Transverse colon (tissue), 4 donors: ENCODE measurements at regions of chr16 and their contacts with region 1.

Region 1: DNA sequence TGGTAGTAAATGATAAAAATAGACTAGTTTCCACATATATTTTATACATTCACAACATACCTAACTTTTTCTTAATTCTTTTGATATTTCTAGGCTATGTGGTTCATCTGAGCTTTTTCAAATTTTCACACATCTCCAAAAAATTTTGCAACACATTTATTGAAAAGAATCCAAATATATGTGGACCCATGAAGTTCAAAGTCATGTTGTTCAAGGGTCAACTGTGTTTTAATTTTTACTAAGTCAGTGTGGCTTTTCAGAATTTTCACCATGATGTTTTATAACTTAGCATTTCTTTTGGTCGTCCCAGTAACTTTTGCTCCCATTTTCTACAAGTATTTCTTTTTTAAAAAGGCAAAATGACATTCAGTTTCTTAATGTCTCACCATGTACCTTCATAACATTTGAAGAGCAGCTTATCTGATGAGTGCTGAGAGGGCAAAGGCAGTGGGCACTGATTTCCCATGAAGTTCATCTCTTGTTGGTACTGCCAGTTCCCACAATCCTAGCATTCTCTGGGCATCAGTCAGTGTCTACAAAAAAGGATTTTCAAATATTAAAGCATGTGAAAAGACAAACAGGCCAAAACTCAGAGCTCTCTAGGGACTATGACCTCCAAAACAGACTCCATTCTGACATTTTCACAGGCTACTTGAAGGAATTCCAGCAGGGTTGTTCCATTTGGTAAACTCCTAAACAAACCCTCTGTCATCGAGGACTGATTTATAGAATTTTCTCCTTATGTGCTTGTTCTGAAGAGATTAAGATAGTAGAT is 80.3 kb downstream of the MRTFB start:
- DNase-seq: no peak
- H3K4me3 ChIP-seq: no peak overlapping the region
- H3K27ac ChIP-seq: no peak overlapping the region
- H3K4me1 ChIP-seq: peaks cover 0 to 3% (median 0%) of the 10 kb centered on the region in 4 donors
- H3K27me3 ChIP-seq: no peaks in the 10 kb centered on the region
- CTCF ChIP-seq: no peak
- EP300 ChIP-seq: no peak
- POLR2A ChIP-seq: no peak

Region 2: DNA sequence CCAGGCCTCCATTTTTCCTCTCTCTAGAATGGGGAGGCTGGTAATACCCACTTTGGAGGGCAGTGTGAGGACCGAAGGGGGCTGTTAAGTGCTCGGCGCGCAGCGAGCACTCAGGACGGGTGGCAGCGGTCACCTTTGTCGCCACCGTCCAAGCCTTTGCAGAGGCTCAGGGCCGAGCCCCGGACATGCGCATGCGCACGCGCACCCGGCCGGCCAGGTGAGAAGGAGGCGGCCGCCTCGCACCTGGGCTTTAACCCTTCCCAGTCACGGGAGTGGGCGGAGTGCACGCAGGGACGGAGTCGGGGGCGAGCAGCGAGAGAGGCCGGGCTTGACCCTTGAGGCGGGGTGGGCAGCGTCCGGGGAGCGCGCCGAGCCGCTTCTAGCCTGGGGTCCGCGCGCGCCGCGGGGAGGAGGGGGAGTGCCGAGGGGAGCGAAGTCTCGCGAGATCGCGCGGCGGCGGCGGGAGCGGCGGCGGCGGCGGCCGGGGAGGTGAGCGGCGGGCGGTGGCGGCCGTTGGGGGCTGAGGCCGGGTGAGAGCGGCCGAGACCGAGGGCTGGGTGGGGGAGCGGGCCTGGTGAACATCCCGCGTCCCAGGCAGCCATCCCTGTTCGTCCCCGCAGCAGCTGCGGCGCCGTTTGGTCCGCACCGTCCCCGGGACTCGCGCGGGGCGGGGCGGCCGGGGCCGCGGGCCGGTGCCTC is 80.4 kb before region 1 on chr16 and contains the start of gene MRTFB:
- in situ Hi-C with region 1: loop called in 1 of 4 experiments (anchors 25 kb)
- intact Hi-C with region 1: no loop called
- DNase-seq: peak; percentile 86
- H3K4me3 ChIP-seq: peak within 1 kb of the TSS; percentile 25 to 96 (median 68)
- H3K27ac ChIP-seq: peak within 1 kb of the TSS; percentile 68 to 89 (median 81)
- H3K4me1 ChIP-seq: peaks cover 0 to 18% (median 12%) of the 10 kb centered on the region in 4 donors
- H3K27me3 ChIP-seq: no peaks in the 10 kb centered on the region
- CTCF ChIP-seq: no peak
- EP300 ChIP-seq: no peak
- POLR2A ChIP-seq: peak; percentile 48
- total RNA-seq, gene MRTFB: 37.8 to 82.7 (median 47.9) TPM